ENCODE measurements at regions of chr3 and their contacts with region 1.

Region 1: GRCh38 chr3:11060500-11061251 is 68.1 kb downstream of the SLC6A1 start:
- DNase-seq: peak; percentile 53
- ATAC-seq: peak; percentile 71
- H3K4me3 Mint-ChIP-seq: no peak overlapping the region
- H3K27ac Mint-ChIP-seq: no peak overlapping the region
- H3K4me1 Mint-ChIP-seq: no peaks in the 10 kb centered on the region
- H3K27me3 Mint-ChIP-seq: peaks cover 14% of the 10 kb centered on the region
- CTCF ChIP-seq: peak; percentile 73

Region 2: GRCh38 chr3:10299679-10300078 is 761.0 kb before region 1 on chr3:
- CTCF ChIA-PET with region 1: no interaction called
- POLR2A ChIA-PET with region 1: no interaction called
- intact Hi-C with region 1: no loop called
- DNase-seq: peak; percentile 27
- ATAC-seq: peak; percentile 87
- H3K4me3 Mint-ChIP-seq: no peak overlapping the region
- H3K27ac Mint-ChIP-seq: peak overlapping the region; percentile 82
- H3K4me1 Mint-ChIP-seq: peaks cover 12% of the 10 kb centered on the region
- H3K27me3 Mint-ChIP-seq: no peaks in the 10 kb centered on the region
- CTCF ChIP-seq: no peak

Region 3: DNA sequence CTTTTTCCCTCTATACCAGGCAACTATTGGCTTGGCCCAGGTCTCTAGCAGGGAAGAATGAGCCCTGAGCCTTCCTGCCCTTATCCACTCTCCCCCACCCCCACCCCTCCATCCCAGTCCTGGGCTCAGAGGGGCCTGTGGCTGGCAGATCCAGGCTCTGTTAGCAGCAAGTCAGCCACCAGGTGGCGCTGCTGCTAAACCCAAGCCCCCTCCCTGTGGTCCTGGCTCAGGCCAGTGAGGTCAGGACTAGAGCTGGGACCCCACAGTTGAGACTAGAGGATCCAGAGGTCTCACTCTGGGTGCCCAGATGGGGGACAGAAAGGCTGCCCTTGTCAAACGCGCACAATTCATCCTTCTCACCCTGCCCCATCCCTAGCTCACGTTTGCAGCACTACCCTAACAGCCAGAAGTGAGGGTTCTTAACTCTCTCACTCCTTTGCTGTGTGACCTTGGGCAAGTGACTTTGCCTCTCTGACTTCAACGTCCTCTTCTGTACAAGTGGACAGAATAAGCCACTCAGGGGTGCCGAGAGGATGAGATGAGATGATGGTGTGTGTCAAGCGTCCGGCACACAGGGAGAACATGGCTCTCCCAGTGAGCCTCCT is 114.9 kb before region 1 on chr3:
- CTCF ChIA-PET with region 1: interaction called, 42 read pairs
- POLR2A ChIA-PET with region 1: no interaction called
- intact Hi-C with region 1: loop called (anchors 2 kb)
- DNase-seq: peak; percentile 67
- ATAC-seq: peak; percentile 67
- H3K4me3 Mint-ChIP-seq: no peak overlapping the region
- H3K27ac Mint-ChIP-seq: no peak overlapping the region
- H3K4me1 Mint-ChIP-seq: no peaks in the 10 kb centered on the region
- H3K27me3 Mint-ChIP-seq: peaks cover 10% of the 10 kb centered on the region
- CTCF ChIP-seq: peak; percentile 82

Region 4: DNA sequence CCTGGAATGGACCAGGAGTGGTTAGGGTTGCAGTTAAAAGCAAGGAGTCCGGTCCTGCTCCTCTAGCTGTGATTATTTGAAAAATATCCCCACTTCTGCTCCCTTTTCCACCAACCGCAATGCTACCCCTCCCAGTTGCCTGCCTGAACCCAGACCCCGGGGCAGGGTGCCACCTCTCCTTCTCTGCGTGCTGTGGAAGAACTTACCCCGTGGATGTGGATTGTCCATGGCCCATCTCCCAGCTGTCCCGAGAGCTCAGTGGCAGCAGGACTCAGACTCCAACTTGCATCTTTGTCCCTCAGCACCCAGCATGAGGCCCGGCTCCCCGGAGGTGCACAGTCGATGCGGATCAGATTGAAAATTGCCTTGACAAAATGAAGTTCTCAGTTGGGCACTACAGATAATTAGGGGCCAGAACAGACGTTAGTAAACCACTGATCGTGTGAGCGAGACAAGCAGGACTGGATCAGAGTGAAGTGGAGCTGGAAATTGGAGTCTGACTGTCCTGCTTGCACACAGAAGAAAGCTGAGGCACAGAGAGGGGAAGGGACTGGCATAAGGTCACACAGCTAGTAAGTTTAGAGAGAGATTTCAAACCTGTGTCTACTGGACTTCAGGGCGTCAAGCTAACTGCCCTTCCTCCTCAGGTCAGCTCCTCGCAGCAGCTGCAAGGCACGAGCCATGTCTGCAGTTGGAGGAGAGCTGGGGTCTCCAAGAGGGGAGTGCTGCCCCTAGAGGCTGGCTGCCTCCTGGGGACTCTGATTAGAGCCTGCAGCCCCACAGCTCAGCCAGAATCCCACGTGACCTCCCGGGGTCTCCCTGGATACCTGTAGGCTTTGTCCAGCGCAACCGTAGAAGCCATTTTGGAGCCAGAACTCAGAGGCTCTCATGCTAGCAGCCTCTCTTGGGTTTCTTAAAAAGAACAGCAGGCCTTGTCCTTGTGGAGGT is 53.4 kb before region 1 on chr3:
- CTCF ChIA-PET with region 1: no interaction called
- POLR2A ChIA-PET with region 1: no interaction called
- intact Hi-C with region 1: no loop called
- DNase-seq: no peak
- ATAC-seq: no peak
- H3K4me3 Mint-ChIP-seq: no peak overlapping the region
- H3K27ac Mint-ChIP-seq: no peak overlapping the region
- H3K4me1 Mint-ChIP-seq: no peaks in the 10 kb centered on the region
- H3K27me3 Mint-ChIP-seq: no peaks in the 10 kb centered on the region
- CTCF ChIP-seq: no peak

Region 5: DNA sequence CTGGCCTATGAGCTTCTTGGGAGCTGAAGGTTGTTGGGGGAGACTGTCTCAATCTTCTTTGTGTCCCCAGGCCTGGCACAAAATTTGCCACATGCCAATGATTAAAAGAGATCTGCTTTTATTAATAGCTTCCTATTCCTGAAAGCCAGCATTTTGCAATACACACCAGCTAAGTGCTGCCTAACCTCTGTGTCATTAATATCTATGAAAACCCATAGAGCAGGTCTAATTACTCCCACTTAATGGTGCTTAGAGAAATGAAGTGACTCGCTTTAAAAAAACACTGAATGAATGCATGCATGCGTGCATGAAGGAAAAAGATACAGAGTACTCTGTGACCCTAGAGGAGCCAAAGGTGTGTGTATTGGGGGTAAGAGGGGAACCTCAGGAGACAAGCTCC is 13.2 kb before region 1 on chr3:
- CTCF ChIA-PET with region 1: interaction called, 15 read pairs
- POLR2A ChIA-PET with region 1: no interaction called
- intact Hi-C with region 1: no loop called
- DNase-seq: no peak
- ATAC-seq: no peak
- H3K4me3 Mint-ChIP-seq: no peak overlapping the region
- H3K27ac Mint-ChIP-seq: no peak overlapping the region
- H3K4me1 Mint-ChIP-seq: no peaks in the 10 kb centered on the region
- H3K27me3 Mint-ChIP-seq: peaks cover 9% of the 10 kb centered on the region
- CTCF ChIP-seq: no peak

Region 6: DNA sequence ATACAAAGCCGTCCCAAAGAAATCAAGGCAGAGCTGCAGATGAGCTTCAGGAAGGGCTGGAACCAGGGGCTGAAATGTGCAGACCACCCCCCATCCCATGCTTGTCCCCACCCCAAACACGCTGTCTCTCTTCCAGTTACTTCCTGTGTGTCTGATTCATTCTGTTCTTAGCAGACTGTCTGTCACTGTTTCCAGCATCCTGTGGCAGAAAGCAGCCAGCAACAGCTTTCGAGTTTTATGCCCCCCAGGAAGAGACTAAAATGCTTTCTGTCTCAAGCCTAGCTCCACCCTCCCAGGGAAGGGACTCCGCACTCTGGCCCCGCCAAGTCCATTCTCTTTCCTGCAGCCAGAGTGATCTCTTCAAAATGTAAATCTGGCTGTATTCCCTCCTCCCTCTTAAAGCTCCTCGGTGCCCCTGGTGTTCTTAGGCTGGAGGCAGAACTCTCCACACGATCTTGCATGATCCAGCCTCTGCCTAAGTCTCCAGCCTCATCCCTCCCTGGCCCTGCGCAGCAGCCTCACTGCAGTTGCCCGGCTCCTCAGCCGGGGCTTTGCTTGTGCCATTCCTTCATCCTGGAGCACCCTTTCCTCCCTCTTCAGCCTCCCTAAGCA is 135.2 kb after region 1 on chr3:
- CTCF ChIA-PET with region 1: interaction called, 5 read pairs
- POLR2A ChIA-PET with region 1: no interaction called
- intact Hi-C with region 1: loop called (anchors 10 kb)
- DNase-seq: peak; percentile 71
- ATAC-seq: peak; percentile 89
- H3K4me3 Mint-ChIP-seq: peak overlapping the region; percentile 55
- H3K27ac Mint-ChIP-seq: peak overlapping the region; percentile 84
- H3K4me1 Mint-ChIP-seq: peaks cover 19% of the 10 kb centered on the region
- H3K27me3 Mint-ChIP-seq: no peaks in the 10 kb centered on the region
- CTCF ChIP-seq: no peak

Region 7: DNA sequence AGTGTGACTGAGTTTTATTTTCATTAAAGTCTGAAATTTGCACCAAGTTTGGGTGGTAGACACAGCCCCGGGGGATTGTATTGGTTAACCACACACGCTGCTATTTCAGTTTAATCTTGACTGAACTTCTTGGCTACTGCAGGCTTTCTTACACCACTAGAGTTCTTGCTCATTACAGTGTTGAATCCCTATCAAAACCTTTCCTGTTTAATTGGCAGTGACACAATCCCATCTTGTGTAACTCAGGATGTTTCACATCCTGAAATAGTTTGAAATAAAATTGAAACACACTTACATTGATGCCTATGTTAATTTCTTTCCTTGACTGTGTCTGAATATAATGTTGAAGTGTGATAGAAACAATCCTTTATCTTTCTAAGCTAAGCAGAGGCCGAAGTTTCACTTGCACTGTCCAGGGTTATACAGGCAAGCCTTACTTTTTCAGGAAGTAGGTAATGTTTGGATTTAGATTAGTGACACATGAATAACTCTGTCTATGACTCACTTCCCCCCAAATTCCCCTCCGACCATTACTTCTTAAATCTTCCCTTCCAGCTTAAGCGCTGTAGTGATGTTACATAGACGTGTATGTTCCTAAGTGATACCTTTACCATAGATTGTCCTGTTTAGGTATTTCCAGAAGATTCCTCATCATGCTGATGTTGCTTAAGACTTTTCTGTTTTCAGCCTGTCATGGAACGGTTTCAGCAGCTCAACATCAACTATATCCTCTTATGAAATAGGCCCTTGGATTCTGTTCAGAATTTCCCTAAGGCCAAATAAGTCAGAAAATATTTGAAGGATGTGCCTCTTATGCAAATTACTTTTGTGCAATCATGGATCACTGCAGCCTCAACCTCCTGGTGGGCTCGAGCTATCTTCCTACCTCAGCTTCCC is 228.4 kb after region 1 on chr3:
- CTCF ChIA-PET with region 1: no interaction called
- POLR2A ChIA-PET with region 1: no interaction called
- intact Hi-C with region 1: no loop called
- DNase-seq: peak; percentile 55
- ATAC-seq: peak; percentile 50
- H3K4me3 Mint-ChIP-seq: peak overlapping the region; percentile 44
- H3K27ac Mint-ChIP-seq: peak overlapping the region; percentile 89
- H3K4me1 Mint-ChIP-seq: peaks cover 58% of the 10 kb centered on the region
- H3K27me3 Mint-ChIP-seq: no peaks in the 10 kb centered on the region
- CTCF ChIP-seq: no peak

Region 8: GRCh38 chr3:11335056-11335608 is 274.5 kb after region 1 on chr3:
- CTCF ChIA-PET with region 1: interaction called, 27 read pairs
- POLR2A ChIA-PET with region 1: no interaction called
- intact Hi-C with region 1: no loop called
- DNase-seq: peak; percentile 19
- ATAC-seq: peak; percentile 79
- H3K4me3 Mint-ChIP-seq: no peak overlapping the region
- H3K27ac Mint-ChIP-seq: no peak overlapping the region
- H3K4me1 Mint-ChIP-seq: peaks cover 7% of the 10 kb centered on the region
- H3K27me3 Mint-ChIP-seq: no peaks in the 10 kb centered on the region
- CTCF ChIP-seq: peak; percentile 59

Region 9: GRCh38 chr3:11379233-11379823 is 318.7 kb after region 1 on chr3:
- CTCF ChIA-PET with region 1: no interaction called
- POLR2A ChIA-PET with region 1: no interaction called
- intact Hi-C with region 1: no loop called
- DNase-seq: no peak
- ATAC-seq: peak; percentile 34
- H3K4me3 Mint-ChIP-seq: no peak overlapping the region
- H3K27ac Mint-ChIP-seq: no peak overlapping the region
- H3K4me1 Mint-ChIP-seq: no peaks in the 10 kb centered on the region
- H3K27me3 Mint-ChIP-seq: no peaks in the 10 kb centered on the region
- CTCF ChIP-seq: peak; percentile 23